ENCODE measurements at regions of chr9 and their contacts with region 1.

Region 1: GRCh38 chr9:136965771-136966484 is 11.4 kb upstream of the PTGDS start:
- DNase-seq: peak in 5 of 9 experiments; percentile 34 to 89 (median 73)
- ATAC-seq: peak; percentile 77
- H3K4me3 ChIP-seq: peak overlapping the region; percentile 27 to 37
- H3K4me3 Mint-ChIP-seq: peak overlapping the region; percentile 75
- H3K27ac ChIP-seq: peak overlapping the region; percentile 11 to 83
- H3K27ac Mint-ChIP-seq: peak overlapping the region; percentile 90
- H3K4me1 ChIP-seq: peaks cover 41% of the 10 kb centered on the region
- H3K4me1 Mint-ChIP-seq: peaks cover 30% of the 10 kb centered on the region
- H3K27me3 ChIP-seq: no peaks in the 10 kb centered on the region
- H3K27me3 Mint-ChIP-seq: no peaks in the 10 kb centered on the region
- CTCF ChIP-seq: no peak

Region 2: DNA sequence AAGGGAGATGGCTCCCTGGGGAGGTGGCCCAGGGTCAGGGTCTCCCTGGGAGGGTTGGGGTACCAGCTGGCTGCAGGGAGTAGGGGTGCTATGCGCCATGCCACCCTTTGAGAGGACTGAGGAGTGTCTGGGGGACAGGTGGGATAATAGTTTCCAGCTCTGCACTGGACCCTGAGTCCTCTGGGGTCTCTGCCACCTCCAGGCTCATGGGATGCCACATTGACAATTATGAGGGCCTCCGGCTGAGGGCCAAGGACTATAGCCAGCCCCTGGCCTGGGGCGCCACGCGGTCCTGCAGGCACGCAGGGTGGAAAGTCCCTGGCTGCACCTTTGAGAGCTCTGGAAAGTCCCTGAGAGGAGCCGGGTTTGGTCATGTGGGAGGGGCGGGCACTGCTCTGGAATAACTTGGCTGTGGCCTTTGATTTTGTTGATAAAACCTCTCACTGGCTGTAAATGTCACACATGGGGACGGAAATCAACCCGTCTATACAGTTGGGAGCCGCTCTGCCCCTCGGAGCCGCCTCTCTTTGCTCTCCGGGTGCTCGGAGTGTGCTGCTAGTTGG is 63.6 kb before region 1 on chr9:
- CTCF ChIA-PET with region 1: no interaction called
- POLR2A ChIA-PET with region 1: no interaction called
- intact Hi-C with region 1: loop called in 1 of 2 experiments (anchors 2 kb)
- DNase-seq: peak; percentile 51 to 94 (median 69)
- ATAC-seq: peak; percentile 83
- H3K4me3 ChIP-seq: peak overlapping the region in 1 of 2 experiments; percentile 24
- H3K4me3 Mint-ChIP-seq: peak overlapping the region; percentile 56
- H3K27ac ChIP-seq: peak overlapping the region; percentile 59 to 85
- H3K27ac Mint-ChIP-seq: peak overlapping the region; percentile 94
- H3K4me1 ChIP-seq: peaks cover 18% of the 10 kb centered on the region
- H3K4me1 Mint-ChIP-seq: peaks cover 22% of the 10 kb centered on the region
- H3K27me3 ChIP-seq: no peaks in the 10 kb centered on the region
- H3K27me3 Mint-ChIP-seq: no peaks in the 10 kb centered on the region
- CTCF ChIP-seq: no peak

Region 3: DNA sequence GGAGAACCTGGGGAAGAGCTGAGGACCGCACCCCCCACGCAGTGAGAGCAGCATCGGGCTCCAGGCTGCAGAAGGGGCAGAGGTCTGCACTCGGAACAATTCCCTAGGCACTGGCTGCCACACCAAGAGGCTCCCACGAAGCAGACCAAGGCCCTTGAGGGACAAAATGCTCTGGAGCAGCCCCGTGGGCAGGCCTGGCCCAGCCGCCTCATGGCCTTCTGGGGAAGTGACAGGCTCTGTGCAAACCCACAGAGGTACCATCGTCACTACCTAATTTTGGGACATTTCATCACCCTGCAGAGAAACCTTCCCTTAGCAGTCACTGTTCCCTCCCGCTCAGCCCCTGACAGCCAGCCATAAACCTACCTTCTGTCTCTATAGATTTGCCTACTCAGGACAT is 37.3 kb before region 1 on chr9:
- CTCF ChIA-PET with region 1: no interaction called
- POLR2A ChIA-PET with region 1: no interaction called
- intact Hi-C with region 1: no loop called
- DNase-seq: peak in 1 of 9 experiments; percentile 8
- ATAC-seq: no peak
- H3K4me3 ChIP-seq: no peak overlapping the region
- H3K4me3 Mint-ChIP-seq: no peak overlapping the region
- H3K27ac ChIP-seq: no peak overlapping the region
- H3K27ac Mint-ChIP-seq: no peak overlapping the region
- H3K4me1 ChIP-seq: no peaks in the 10 kb centered on the region
- H3K4me1 Mint-ChIP-seq: no peaks in the 10 kb centered on the region
- H3K27me3 ChIP-seq: no peaks in the 10 kb centered on the region
- H3K27me3 Mint-ChIP-seq: no peaks in the 10 kb centered on the region
- CTCF ChIP-seq: no peak

Region 4: DNA sequence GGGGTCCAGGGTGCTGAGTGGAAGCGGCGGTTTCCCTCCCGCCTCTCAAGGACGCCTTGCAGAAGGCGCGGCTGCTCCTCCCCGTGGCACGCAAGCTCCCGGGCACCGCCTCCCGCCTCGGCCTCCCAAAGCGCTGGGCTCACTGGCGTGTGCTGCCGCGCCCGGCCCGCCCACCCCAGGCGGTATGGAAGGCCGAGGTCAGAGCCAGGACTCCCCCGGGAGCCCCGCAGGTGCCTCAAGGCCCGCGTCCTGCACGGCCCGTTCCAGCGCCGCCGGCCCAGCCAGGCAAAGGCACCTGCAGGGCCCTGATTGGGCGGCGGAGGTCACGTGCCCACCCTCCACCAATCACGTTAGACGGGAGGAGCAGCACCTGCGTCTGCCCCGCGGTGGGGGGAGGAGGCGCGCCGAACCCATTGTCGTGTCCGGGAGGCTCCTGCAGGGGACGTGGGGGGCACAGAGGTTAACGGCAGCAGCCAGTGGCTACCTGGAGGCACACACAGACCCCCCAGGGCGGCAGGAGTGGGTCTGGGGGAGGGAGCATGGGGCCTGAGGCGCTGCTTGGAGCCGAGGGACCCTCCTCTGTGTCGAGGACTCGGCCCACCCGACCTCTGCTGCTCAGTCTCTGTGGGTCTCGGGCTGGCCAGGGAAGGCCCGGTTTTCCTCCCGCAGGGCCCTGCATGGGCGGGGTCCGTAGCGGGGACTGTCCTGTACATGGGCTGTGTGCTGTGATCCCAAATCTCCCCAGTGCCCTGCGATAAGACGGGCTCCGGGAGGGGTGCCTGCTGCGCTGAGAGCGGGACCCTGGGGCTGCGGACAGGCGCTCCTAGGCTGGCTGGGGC is 15.9 kb before region 1 on chr9:
- CTCF ChIA-PET with region 1: interaction called, 6 read pairs
- POLR2A ChIA-PET with region 1: interaction called, 3 read pairs
- intact Hi-C with region 1: loop called in 1 of 2 experiments (anchors 2 kb)
- DNase-seq: peak; percentile 93 to 98 (median 97)
- ATAC-seq: peak; percentile 96
- H3K4me3 ChIP-seq: peak overlapping the region; percentile 68 to 70
- H3K4me3 Mint-ChIP-seq: peak overlapping the region; percentile 85
- H3K27ac ChIP-seq: peak overlapping the region; percentile 65 to 75
- H3K27ac Mint-ChIP-seq: peak overlapping the region; percentile 90
- H3K4me1 ChIP-seq: peaks cover 11% of the 10 kb centered on the region
- H3K4me1 Mint-ChIP-seq: peaks cover 14% of the 10 kb centered on the region
- H3K27me3 ChIP-seq: no peaks in the 10 kb centered on the region
- H3K27me3 Mint-ChIP-seq: no peaks in the 10 kb centered on the region
- CTCF ChIP-seq: peak; percentile 51